ENCODE measurements at regions of chr1 and their contacts with region 1.

Region 1: DNA sequence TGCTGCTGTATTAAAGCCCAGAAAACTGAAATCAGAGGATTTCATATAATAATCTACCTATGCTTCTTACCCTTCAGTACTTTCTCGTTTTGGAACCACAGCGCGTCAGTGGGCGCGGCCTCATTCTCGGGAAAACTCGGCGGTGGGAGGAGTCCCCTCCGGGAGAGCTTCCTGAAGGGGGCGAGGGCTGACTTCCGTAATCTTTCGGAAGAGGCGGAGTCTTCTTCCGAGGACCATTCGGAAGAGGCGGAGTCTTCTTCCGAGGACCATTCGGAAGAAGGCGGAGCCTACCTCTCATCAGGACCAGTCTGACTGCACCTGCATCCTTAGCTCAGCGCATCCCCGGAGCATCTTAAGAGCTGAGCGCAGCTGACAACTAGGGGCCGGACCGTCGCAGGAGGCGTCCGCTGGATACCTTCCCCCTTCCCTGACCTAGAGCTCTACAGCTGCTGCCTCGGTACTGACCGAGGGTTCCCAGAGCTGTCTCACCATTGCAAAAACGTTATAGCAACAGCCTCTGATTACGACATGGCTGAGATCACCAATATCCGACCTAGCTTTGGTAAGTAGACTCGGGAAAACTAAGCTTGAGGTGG is at the start of gene SYT11:
- DNase-seq: peak; percentile 97
- ATAC-seq: peak; percentile 89
- H3K4me3 Mint-ChIP-seq: peak within 1 kb of the TSS; percentile 78
- H3K27ac Mint-ChIP-seq: peak within 1 kb of the TSS; percentile 83
- H3K4me1 Mint-ChIP-seq: peaks cover 44% of the 10 kb centered on the region
- H3K27me3 Mint-ChIP-seq: peaks cover 3% of the 10 kb centered on the region
- total RNA-seq, gene SYT11: 14.3 to 14.8 TPM

Region 2: GRCh38 chr1:155193275-155193990 is 665.9 kb before region 1 on chr1:
- CTCF ChIA-PET with region 1: no interaction called
- POLR2A ChIA-PET with region 1: no interaction called
- intact Hi-C with region 1: loop called in 1 of 2 experiments (anchors 5 kb)
- DNase-seq: peak; percentile 89
- ATAC-seq: peak; percentile 62
- H3K4me3 Mint-ChIP-seq: peak overlapping the region; percentile 94
- H3K27ac Mint-ChIP-seq: peak overlapping the region; percentile 96
- H3K4me1 Mint-ChIP-seq: peaks cover 31% of the 10 kb centered on the region
- H3K27me3 Mint-ChIP-seq: no peaks in the 10 kb centered on the region

Region 3: DNA sequence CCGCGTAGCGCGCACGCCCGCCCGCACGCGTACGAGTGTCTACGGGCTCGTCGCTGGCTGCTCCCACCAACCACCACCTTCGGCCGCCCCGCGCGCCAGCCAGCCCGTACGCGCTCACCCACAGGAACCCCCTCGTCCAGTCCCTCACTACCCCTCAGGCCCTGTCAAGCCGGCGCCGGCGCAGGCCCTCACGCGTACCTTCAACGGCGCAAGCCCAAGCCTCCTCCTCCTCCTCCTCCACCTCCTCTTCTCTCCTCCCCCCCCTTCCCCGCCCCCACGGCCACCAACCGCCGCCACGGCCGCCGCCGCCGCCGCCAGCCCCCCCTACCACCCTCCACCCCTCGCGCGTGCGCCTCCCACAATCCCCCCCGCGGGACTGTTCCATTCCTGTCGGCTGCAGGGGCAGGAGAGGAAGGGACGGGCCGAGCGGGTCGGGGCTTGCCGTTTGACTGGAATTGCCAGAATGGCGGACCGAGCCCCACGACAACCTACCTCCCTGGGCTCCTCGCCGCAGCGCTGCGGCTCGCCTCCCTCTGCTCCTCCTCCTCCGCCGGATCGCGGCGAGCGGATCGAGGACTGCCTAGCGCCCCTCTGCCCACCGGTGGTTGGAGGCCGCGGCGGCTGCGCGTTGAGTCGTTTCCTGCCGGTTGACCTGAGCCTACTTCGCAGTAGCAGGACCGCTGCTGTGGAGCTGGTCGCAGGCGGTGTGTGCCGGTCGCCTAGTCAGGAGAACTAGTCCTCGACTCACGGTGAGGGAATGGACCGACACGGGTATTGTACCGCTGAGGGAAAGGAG is 296.6 kb before region 1 on chr1 and contains the start of gene ASH1L:
- CTCF ChIA-PET with region 1: no interaction called
- POLR2A ChIA-PET with region 1: no interaction called
- intact Hi-C with region 1: loop called in 1 of 2 experiments (anchors 2 kb)
- DNase-seq: peak; percentile 96
- ATAC-seq: peak; percentile 83
- H3K4me3 Mint-ChIP-seq: peak within 1 kb of the TSS; percentile 90
- H3K27ac Mint-ChIP-seq: peak within 1 kb of the TSS; percentile 99
- H3K4me1 Mint-ChIP-seq: peaks cover 46% of the 10 kb centered on the region
- H3K27me3 Mint-ChIP-seq: no peaks in the 10 kb centered on the region
- total RNA-seq, gene ASH1L: 28.1 to 31.4 TPM

Region 4: DNA sequence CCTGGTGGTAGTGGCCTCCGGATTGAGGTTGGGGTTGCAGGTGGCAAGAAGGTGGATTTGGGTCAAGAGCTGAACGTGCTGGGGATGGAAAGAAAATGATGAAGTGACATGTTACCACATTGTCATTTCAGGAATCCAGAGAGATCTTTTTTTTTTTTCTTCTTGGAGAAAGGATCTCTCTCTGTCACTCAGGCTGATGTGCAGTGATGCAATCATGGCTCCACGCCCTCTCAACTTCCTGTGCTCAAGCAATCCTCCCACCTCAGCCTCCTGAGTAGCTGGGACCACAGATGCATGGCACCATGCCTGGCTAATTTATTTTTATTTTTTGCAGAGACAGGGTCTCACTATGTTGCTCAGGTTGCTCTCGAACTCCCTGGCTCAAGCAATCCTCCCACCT is 82.9 kb before region 1 on chr1:
- CTCF ChIA-PET with region 1: no interaction called
- POLR2A ChIA-PET with region 1: no interaction called
- intact Hi-C with region 1: no loop called
- DNase-seq: peak; percentile 39
- ATAC-seq: peak; percentile 51
- H3K4me3 Mint-ChIP-seq: no peak overlapping the region
- H3K27ac Mint-ChIP-seq: peak overlapping the region; percentile 87
- H3K4me1 Mint-ChIP-seq: peaks cover 9% of the 10 kb centered on the region
- H3K27me3 Mint-ChIP-seq: no peaks in the 10 kb centered on the region

Region 5: GRCh38 chr1:155893389-155894142 is 34.2 kb after region 1 on chr1:
- CTCF ChIA-PET with region 1: interaction called, 5 read pairs
- POLR2A ChIA-PET with region 1: interaction called, 11 read pairs
- intact Hi-C with region 1: no loop called
- DNase-seq: peak; percentile 40
- ATAC-seq: peak; percentile 98
- H3K4me3 Mint-ChIP-seq: no peak overlapping the region
- H3K27ac Mint-ChIP-seq: peak overlapping the region; percentile 72
- H3K4me1 Mint-ChIP-seq: peaks cover 18% of the 10 kb centered on the region
- H3K27me3 Mint-ChIP-seq: no peaks in the 10 kb centered on the region

Region 6: GRCh38 chr1:155978325-155978972 is 119.1 kb after region 1 on chr1 and contains the start of gene ARHGEF2:
- CTCF ChIA-PET with region 1: no interaction called
- POLR2A ChIA-PET with region 1: interaction called, 4 read pairs
- intact Hi-C with region 1: loop called (anchors 2 to 5 kb)
- DNase-seq: peak; percentile 88
- ATAC-seq: peak; percentile 57
- H3K4me3 Mint-ChIP-seq: peak within 1 kb of the TSS; percentile 100
- H3K27ac Mint-ChIP-seq: peak within 1 kb of the TSS; percentile 96
- H3K4me1 Mint-ChIP-seq: peaks cover 68% of the 10 kb centered on the region
- H3K27me3 Mint-ChIP-seq: no peaks in the 10 kb centered on the region
- total RNA-seq, gene ARHGEF2: 135 to 216 TPM

Region 7: DNA sequence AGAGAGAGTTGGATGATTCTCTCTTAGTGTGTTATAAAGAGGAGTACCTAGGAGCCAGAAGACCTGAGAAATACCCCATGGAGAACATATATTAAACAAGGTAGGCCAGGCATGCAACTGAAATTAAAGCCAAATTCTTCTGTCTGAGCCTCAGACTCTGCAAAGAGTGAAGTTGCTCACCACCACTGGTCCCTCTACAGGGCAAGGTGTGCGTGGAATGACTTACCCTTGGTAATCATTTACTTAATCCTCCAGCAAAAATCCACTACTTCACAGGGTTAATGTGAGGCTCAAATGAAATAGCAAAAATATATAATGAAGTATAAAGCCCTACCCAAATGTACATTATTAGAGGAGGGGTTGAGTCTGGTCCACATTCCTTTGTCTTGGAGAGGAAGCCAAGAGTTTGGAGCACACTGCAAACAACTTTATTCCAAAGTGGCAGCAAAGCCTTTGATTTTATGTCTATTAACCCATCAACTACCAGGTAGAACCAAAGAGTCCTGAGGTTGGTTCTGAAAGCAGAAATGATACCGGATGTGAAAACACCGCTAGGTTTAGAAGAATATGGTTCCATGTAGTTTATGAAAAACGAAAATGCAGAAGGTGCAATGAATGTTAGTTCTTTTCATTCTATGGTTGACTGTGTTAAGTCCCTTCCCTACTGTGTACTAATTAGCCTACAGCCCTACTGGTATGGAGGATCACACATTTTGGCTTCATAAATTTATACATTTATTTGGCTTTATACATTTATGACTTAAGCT is 152.9 kb after region 1 on chr1:
- CTCF ChIA-PET with region 1: no interaction called
- POLR2A ChIA-PET with region 1: no interaction called
- intact Hi-C with region 1: no loop called
- DNase-seq: no peak
- ATAC-seq: no peak
- H3K4me3 Mint-ChIP-seq: no peak overlapping the region
- H3K27ac Mint-ChIP-seq: no peak overlapping the region
- H3K4me1 Mint-ChIP-seq: peaks cover 2% of the 10 kb centered on the region
- H3K27me3 Mint-ChIP-seq: no peaks in the 10 kb centered on the region

Region 8: GRCh38 chr1:156193488-156194299 is 334.4 kb after region 1 on chr1 and contains the start of gene SLC25A44:
- CTCF ChIA-PET with region 1: no interaction called
- POLR2A ChIA-PET with region 1: no interaction called
- intact Hi-C with region 1: loop called in 1 of 2 experiments (anchors 1 kb)
- DNase-seq: peak; percentile 98
- ATAC-seq: peak; percentile 96
- H3K4me3 Mint-ChIP-seq: peak within 1 kb of the TSS; percentile 100
- H3K27ac Mint-ChIP-seq: peak within 1 kb of the TSS; percentile 97
- H3K4me1 Mint-ChIP-seq: peaks cover 43% of the 10 kb centered on the region
- H3K27me3 Mint-ChIP-seq: no peaks in the 10 kb centered on the region
- total RNA-seq, gene SLC25A44: 42.4 to 51.9 TPM

Region 9: DNA sequence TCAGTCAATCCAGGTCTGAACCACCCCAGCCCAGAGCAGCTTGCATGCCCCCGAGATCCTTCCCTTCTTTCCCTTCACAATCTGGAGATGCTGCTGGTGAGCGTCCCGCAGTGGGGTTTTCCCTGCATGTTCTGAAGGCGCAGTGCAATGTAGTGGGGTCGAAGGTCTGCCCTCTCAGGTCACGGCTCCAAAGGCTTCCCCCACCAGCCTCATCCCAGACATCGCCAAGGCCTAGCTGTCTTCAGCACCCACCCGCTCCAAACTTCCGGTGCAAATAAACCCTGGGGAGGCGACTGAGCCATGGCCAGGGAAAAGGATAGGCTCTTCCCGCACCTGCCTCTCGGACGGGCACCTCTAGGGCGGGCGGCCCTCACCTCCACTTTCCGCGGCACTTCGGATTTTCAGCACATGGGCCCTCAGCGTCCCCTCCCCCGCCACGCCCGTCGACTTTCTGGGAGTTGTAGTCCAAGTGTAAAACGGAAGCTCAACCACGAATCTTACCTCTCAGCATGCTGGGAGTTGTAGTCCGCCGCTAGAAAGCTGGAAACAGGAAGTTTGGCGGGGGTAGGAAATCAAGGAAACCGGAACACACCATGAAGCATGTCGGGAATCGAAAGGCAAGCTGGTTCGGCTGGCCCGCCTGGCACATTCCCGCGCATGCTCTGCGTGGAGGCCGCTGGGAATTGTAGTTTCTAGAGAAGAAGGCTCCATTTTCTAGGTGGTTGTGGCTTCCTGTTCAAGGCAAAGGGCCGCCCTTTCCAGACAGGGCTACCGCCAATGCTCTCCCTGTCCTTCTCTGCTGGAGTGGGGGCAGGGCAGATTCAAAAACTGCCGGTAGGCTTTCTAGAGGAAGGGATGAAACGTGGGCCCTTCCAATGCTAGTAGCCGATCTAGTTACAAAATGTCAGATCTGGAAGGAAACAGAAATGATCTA is 881.6 kb after region 1 on chr1 and contains the start of gene MRPL24:
- CTCF ChIA-PET with region 1: no interaction called
- POLR2A ChIA-PET with region 1: no interaction called
- intact Hi-C with region 1: loop called in 1 of 2 experiments (anchors 10 kb)
- DNase-seq: peak; percentile 98
- ATAC-seq: peak; percentile 86
- H3K4me3 Mint-ChIP-seq: peak within 1 kb of the TSS; percentile 98
- H3K27ac Mint-ChIP-seq: peak within 1 kb of the TSS; percentile 94
- H3K4me1 Mint-ChIP-seq: peaks cover 49% of the 10 kb centered on the region
- H3K27me3 Mint-ChIP-seq: no peaks in the 10 kb centered on the region
- total RNA-seq, gene MRPL24: 81.9 to 89.7 TPM

Measured in activated CD4-positive, alpha-beta T cell treated with anti-CD3 and anti-CD28 coated beads for 36 hours (primary cell).